ENCODE measurements at regions of chr1 and their contacts with region 1.

Region 1: DNA sequence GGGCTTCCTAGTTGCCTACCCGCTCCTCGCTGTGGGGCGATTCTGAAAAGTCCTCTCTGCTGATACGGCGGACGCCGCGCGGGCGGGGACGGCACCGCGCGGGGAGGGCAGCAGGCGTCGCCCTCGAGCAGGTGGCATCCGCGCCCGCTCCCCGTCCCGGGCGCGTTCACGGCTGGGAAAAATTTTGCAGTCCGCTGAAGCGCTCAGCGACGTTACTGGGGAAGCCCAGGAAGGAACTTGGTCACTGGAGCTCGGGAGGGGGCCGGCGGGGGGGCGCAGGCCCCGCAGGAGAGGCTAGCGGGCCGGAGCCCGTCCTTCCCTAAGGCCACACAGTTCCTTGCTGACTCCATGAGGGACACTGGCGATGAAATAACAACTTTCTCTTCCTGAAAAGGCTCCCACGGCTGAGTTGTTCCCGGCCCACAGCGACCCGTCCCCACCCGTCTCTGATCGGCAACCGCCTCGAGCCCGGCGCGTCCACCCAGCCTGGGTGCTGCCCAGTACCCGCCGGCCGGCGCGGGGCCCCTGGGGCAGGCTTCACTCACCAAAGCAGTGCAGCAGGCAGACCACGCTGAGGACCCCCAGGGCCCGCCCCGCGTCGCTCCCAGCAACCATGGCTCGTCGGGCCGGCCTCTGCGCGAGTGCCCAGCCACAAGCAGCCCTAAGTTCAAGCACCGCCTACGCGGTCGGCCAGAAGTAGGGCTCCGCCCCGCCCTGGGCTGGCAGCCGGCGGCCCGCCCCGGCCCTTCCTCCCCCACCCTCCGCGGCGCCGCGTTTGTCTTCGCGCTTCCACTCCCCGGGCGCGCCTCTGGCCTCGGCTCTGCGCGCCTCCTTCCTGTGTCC is at the start of gene CD58:
- DNase-seq: peak; percentile 93 to 96 (median 95)
- ATAC-seq: peak; percentile 83 to 95 (median 92)
- H3K4me3 ChIP-seq: peak within 1 kb of the TSS; percentile 79 to 99 (median 92)
- H3K27ac ChIP-seq: peak within 1 kb of the TSS; percentile 98 to 100 (median 99)
- H3K4me1 ChIP-seq: peaks cover 3 to 86% (median 49%) of the 10 kb centered on the region in 12 donors
- H3K27me3 ChIP-seq: no peaks in the 10 kb centered on the region
- CTCF ChIP-seq: peak; percentile 58 to 85 (median 72)
- POLR2A ChIP-seq: peak in 1 of 2 donors; percentile 83
- total RNA-seq, gene CD58: 19.6 to 37.5 (median 27.1) TPM

Region 2: DNA sequence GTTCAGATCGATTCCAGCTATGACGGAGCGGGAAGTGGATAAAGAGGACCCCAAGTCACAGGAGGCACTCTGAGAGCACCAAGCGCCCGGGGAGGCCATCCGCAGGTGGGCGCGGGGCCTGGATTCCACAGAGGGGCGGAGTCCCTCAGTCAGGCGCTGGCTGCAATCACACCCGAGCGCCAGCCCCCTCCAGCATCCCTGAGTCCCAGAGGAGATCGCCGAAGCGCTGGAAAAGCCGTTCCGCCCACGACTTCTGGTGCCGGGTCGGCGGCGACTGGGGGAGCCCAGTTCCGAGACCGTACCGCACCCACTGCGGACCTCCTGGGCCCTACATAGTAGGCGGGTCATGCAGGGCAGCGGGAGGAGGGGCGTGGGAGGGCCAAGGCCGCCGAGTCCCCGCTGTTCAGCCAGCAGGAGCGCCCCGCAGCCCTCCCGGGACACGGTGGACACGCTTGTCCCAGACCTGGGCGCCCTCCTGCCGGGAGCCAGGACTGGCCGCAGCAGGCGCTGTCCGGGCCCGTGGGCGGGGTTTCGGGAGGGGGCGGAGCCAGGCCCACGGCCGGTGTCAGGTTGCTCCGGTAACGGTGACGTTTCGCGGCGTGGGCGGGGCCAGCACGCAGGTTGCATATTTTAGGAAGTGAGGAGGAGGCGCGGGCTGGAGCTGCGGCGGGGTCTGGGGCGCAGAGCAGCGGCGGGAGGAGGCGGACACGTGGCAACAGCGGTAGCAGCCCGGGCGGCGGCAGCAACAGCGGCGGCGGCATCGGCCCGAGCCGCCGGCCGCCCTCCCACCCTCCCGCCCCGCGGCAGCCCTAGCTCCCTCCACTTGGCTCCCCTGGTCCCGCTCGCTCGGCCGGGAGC is 197.8 kb before region 1 on chr1 and contains the start of gene ATP1A1:
- intact Hi-C with region 1: loop called in 2 of 10 experiments (anchors 10 kb)
- DNase-seq: peak; percentile 97 to 99 (median 98)
- ATAC-seq: peak; percentile 76 to 89 (median 83)
- H3K4me3 ChIP-seq: peak within 1 kb of the TSS; percentile 73 to 95 (median 88)
- H3K27ac ChIP-seq: peak within 1 kb of the TSS; percentile 89 to 99 (median 97)
- H3K4me1 ChIP-seq: peaks cover 0 to 49% (median 40%) of the 10 kb centered on the region in 12 donors
- H3K27me3 ChIP-seq: no peaks in the 10 kb centered on the region
- CTCF ChIP-seq: peak in 3 of 12 donors; percentile 9 to 38 (median 36)
- POLR2A ChIP-seq: peak; percentile 99 to 100
- total RNA-seq, gene ATP1A1: 175 to 436 (median 241) TPM

Region 3: DNA sequence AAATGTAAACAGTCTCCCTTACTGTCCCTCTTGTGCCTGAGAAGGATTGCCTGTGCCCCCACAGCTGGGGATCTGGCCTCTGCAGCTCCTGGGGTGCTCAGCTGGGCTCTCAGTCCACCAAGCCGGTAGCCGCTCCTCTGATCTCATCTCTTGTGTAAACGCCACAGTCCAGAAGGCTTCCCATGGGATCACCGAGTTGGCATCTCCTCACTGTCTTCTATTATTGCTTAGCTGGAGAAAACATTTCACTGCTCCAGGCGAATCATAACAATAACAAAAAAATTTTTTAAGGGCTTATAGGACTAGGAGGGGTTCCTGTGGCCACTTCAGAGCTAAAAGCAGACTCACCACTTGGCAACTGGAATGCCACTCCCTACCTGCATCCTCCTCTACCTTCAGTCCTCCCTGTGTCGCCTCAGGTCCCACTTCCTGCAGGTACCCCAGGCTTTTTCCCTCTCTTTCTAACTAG is 121.7 kb before region 1 on chr1:
- intact Hi-C with region 1: no loop called
- DNase-seq: no peak
- ATAC-seq: no peak
- H3K4me3 ChIP-seq: no peak overlapping the region
- H3K27ac ChIP-seq: no peak overlapping the region
- H3K4me1 ChIP-seq: no peaks in the 10 kb centered on the region
- H3K27me3 ChIP-seq: no peaks in the 10 kb centered on the region
- CTCF ChIP-seq: no peak
- POLR2A ChIP-seq: no peak

Region 4: DNA sequence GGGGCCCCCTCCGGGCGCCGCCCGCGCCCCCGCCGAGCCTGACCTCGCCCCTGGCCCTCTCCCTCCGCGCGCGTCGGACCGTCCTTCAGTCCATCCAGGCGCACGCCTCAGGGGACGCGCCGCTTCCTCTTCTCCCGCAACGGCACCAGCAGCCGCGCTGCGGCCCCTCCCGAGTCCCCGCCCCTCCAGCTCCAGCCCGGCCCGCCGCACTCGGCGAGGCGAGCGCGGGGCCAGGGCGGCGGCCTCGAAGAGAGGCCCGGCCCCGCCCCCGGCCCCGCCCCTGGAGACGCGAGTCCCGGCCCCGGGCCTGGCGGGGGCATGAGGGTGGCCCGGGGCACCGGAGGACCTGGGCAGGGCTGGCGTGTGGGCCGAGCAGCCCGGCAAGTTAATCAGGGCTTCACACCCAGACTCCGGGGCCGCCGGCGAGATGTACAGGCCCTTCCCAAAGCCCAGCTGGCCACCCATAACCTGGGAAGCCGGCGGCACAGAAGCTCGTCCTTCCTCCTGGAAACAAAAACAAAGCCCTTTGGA is 97.1 kb after region 1 on chr1 and contains the start of gene IGSF3:
- intact Hi-C with region 1: loop called in 8 of 10 experiments (anchors 1 to 5 kb)
- DNase-seq: peak; percentile 69 to 90 (median 82)
- ATAC-seq: peak; percentile 45 to 93 (median 83)
- H3K4me3 ChIP-seq: peak within 1 kb of the TSS; percentile 51 to 90 (median 74)
- H3K27ac ChIP-seq: peak within 1 kb of the TSS in 7 of 12 donors; percentile 42 to 66 (median 60)
- H3K4me1 ChIP-seq: peaks cover 0 to 28% (median 12%) of the 10 kb centered on the region in 12 donors
- H3K27me3 ChIP-seq: peaks cover 0 to 42% (median 0%) of the 10 kb centered on the region in 9 donors
- CTCF ChIP-seq: no peak
- POLR2A ChIP-seq: peak in 1 of 2 donors; percentile 25
- total RNA-seq, gene IGSF3: 8.4 to 19.3 (median 11.9) TPM

Region 5: DNA sequence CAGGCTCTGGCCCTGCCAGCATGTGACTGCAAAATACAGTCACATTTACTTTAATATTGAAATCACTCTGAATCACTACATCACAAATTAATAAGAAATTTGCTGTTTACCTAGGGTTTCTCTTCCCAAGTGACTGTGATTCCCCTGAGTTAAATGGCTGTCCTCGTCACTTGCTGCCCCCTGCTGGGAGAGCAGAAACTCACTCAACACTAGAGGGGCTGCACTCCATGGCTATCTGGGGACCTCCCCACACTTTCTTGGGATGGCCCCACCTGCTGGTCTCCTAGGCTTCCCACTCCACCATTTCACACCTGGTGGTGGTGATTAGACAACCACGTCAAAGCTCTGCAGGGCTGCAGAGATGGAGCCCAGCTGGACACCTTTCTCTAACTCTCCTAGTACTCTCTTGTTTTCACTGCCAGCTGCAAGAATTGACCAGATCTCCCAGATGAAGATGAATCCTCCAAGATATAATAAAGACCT is 247.0 kb after region 1 on chr1:
- intact Hi-C with region 1: loop called in 1 of 10 experiments (anchors 10 kb)
- DNase-seq: no peak
- ATAC-seq: peak in 1 of 4 donors; percentile 49
- H3K4me3 ChIP-seq: no peak overlapping the region
- H3K27ac ChIP-seq: no peak overlapping the region
- H3K4me1 ChIP-seq: peaks cover 0 to 6% (median 0%) of the 10 kb centered on the region in 12 donors
- H3K27me3 ChIP-seq: no peaks in the 10 kb centered on the region
- CTCF ChIP-seq: peak in 10 of 12 donors; percentile 28 to 65 (median 40)
- POLR2A ChIP-seq: no peak

Region 6: DNA sequence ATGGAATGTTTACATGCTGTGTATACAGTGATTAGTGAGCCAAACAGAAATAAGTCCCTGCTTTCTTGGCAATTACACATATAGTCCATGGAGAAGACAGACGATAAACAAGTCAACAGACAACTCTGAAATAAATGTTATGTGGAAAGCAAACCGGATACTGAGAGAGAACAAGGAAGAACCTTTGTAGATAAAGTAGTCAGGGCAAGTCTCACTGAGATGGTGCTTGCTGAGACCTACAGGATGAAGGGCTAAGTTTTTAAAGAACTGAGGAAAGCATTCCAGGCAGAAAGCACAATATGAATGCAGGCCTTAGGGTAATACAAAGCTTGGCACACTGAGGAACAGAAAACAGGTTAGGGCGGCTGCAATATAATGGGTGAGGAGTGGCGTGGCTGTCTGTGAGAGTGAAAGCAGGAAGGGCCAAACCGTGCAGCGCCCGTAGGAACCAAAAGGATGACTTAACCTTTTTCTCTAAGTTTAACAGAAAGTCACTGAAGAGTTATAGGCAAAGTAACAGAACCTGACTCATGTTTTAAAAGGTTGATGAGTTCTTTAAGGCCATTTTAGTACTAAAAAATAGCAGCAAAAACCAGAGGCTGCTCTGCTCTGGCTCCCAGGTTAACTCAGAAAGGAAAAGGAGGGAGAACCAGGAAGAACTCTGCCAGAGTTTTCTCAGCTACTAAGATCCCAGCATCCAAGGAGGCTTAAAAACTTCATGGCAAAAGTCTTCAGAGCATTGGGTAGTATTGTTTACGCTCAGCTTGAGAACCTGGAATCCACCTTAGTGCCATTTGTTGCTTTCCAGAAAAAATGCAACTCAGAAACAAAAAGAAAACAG is 480.9 kb after region 1 on chr1:
- intact Hi-C with region 1: loop called in 7 of 10 experiments (anchors 5 to 10 kb)
- DNase-seq: no peak
- ATAC-seq: peak in 1 of 4 donors; percentile 51
- H3K4me3 ChIP-seq: peak overlapping the region in 5 of 12 donors; percentile 6 to 28 (median 20)
- H3K27ac ChIP-seq: peak overlapping the region in 4 of 12 donors; percentile 24 to 71 (median 39)
- H3K4me1 ChIP-seq: peaks cover 0 to 32% (median 0%) of the 10 kb centered on the region in 12 donors
- H3K27me3 ChIP-seq: no peaks in the 10 kb centered on the region
- CTCF ChIP-seq: no peak
- POLR2A ChIP-seq: no peak